Activated T-helper 1 cell treated with anti-CD3 and anti-CD28 coated beads, Interleukin-12 subunit alpha, Interleukin-12 subunit beta, Interleukin-2, Interleukin-4 antibody, amounts not matched to agents 30 ng/mL and 10 ng/mL and 1 ng/mL, durations not matched to agents 14 hours and 24 hours and 36 hours (primary cell): ENCODE measurements at regions of chr6 and their contacts with region 1.

Region 1: GRCh38 chr6:42879372-42880239 is at the start of gene RPL7L1:
- DNase-seq: peak; percentile 82
- H3K4me3 Mint-ChIP-seq: peak within 1 kb of the TSS; percentile 96
- H3K27ac Mint-ChIP-seq: peak within 1 kb of the TSS; percentile 97
- H3K4me1 Mint-ChIP-seq: peaks cover 30% of the 10 kb centered on the region
- H3K27me3 Mint-ChIP-seq: no peaks in the 10 kb centered on the region
- total RNA-seq, gene RPL7L1: 179 TPM in 2 replicates

Region 2: DNA sequence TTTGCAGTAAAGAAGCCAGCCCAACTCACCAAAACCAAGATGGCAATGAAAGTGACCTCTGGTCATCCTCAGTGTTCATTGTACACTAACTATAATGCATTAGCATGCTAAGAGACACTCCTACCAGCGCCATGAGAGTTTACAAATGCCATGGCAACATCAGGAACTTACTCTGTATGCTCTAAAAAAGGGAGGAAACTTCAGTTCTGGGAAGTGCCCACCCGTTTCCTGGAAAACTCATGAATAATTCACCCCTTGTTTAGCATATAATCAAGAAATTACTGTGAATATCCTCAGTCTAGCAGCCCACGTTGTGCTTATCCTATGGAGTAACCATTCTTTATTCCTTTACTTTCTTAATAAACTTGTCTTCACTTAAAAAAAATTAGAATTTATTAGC is 408.5 kb before region 1 on chr6:
- intact Hi-C with region 1: no loop called
- DNase-seq: no peak
- H3K4me3 Mint-ChIP-seq: no peak overlapping the region
- H3K27ac Mint-ChIP-seq: no peak overlapping the region
- H3K4me1 Mint-ChIP-seq: peaks cover 5% of the 10 kb centered on the region
- H3K27me3 Mint-ChIP-seq: peaks cover 5% of the 10 kb centered on the region

Region 3: DNA sequence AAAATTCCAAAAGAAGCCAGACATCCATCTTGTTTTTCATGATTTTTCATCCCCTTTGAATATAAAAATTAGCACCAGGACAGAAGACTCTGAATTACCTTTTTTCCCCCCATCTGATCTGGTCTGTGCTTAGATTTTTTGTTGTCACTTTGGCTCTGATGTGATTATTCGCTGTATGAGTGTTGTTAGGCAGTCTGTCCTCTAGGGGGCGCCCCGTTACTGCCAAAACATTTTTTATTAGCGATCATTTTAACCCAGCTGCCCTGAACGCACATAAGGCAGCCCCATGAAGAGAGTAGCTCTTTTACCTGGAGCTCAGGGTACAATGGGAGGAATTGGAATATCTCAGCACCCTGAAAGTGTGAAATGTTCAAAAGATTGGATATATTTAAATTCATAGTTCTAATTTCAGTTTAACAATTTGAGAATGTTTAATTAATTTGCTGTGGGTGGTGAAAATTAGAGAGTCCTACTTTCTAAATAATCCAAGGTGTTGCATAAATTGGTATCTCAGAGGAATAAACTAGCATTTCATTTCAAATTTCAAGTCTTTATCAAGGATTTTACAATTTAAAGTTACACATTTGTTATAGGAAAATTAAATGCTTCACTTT is 218.0 kb before region 1 on chr6:
- intact Hi-C with region 1: loop called (anchors 1 kb)
- DNase-seq: peak; percentile 62
- H3K4me3 Mint-ChIP-seq: no peak overlapping the region
- H3K27ac Mint-ChIP-seq: no peak overlapping the region
- H3K4me1 Mint-ChIP-seq: peaks cover 6% of the 10 kb centered on the region
- H3K27me3 Mint-ChIP-seq: no peaks in the 10 kb centered on the region

Region 4: DNA sequence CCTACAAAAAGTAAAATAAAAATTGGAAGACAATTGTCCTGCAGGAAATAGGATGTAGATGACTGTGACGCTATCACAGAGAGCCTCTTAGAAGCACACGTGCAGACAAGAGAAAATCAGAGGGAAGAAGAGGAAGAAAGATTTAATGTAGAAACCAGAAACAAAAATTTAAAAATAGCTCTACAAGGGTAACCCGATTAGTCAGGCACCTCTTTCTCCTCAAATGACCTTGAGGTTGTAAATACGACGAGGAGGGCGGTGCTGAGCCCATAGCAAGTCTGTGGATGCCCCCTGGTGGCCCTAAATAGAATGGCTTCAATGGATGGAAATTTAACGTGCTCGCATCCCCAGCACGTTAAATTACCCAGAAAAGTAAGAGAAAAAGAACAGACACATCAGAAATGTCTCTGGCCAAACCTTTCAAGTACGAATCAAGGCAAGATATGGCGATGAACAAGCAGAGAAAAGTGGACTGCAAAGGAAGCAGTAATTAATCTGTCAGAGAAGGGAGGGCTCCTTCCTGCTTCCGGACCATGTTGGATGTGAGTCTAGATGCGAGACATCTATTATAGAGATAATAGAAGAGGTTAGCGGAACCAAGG is 153.0 kb before region 1 on chr6:
- intact Hi-C with region 1: loop called (anchors 1 kb)
- DNase-seq: peak; percentile 59
- H3K4me3 Mint-ChIP-seq: peak overlapping the region; percentile 75
- H3K27ac Mint-ChIP-seq: peak overlapping the region; percentile 98
- H3K4me1 Mint-ChIP-seq: peaks cover 19% of the 10 kb centered on the region
- H3K27me3 Mint-ChIP-seq: peaks cover 5% of the 10 kb centered on the region

Region 5: GRCh38 chr6:42771741-42772100 is 107.9 kb before region 1 on chr6:
- intact Hi-C with region 1: loop called (anchors 1 kb)
- DNase-seq: no peak
- H3K4me3 Mint-ChIP-seq: peak overlapping the region; percentile 74
- H3K27ac Mint-ChIP-seq: peak overlapping the region; percentile 100
- H3K4me1 Mint-ChIP-seq: peaks cover 55% of the 10 kb centered on the region
- H3K27me3 Mint-ChIP-seq: no peaks in the 10 kb centered on the region

Region 6: GRCh38 chr6:42782622-42783176 is 96.9 kb before region 1 on chr6:
- intact Hi-C with region 1: loop called (anchors 1 kb)
- DNase-seq: peak; percentile 48
- H3K4me3 Mint-ChIP-seq: peak overlapping the region; percentile 96
- H3K27ac Mint-ChIP-seq: peak overlapping the region; percentile 98
- H3K4me1 Mint-ChIP-seq: peaks cover 28% of the 10 kb centered on the region
- H3K27me3 Mint-ChIP-seq: no peaks in the 10 kb centered on the region

Region 7: GRCh38 chr6:42890311-42891198 is 10.9 kb after region 1 on chr6:
- intact Hi-C with region 1: loop called (anchors 1 kb)
- DNase-seq: peak; percentile 86
- H3K4me3 Mint-ChIP-seq: peak overlapping the region; percentile 84
- H3K27ac Mint-ChIP-seq: peak overlapping the region; percentile 89
- H3K4me1 Mint-ChIP-seq: peaks cover 12% of the 10 kb centered on the region
- H3K27me3 Mint-ChIP-seq: no peaks in the 10 kb centered on the region

Region 8: GRCh38 chr6:42978839-42979522 is 99.4 kb after region 1 on chr6 and contains the start of gene PEX6:
- intact Hi-C with region 1: loop called (anchors 1 kb)
- DNase-seq: peak; percentile 94
- H3K4me3 Mint-ChIP-seq: peak within 1 kb of the TSS; percentile 91
- H3K27ac Mint-ChIP-seq: peak within 1 kb of the TSS; percentile 96
- H3K4me1 Mint-ChIP-seq: peaks cover 38% of the 10 kb centered on the region
- H3K27me3 Mint-ChIP-seq: no peaks in the 10 kb centered on the region
- total RNA-seq, gene PEX6: 20.9 TPM in 2 replicates

Region 9: DNA sequence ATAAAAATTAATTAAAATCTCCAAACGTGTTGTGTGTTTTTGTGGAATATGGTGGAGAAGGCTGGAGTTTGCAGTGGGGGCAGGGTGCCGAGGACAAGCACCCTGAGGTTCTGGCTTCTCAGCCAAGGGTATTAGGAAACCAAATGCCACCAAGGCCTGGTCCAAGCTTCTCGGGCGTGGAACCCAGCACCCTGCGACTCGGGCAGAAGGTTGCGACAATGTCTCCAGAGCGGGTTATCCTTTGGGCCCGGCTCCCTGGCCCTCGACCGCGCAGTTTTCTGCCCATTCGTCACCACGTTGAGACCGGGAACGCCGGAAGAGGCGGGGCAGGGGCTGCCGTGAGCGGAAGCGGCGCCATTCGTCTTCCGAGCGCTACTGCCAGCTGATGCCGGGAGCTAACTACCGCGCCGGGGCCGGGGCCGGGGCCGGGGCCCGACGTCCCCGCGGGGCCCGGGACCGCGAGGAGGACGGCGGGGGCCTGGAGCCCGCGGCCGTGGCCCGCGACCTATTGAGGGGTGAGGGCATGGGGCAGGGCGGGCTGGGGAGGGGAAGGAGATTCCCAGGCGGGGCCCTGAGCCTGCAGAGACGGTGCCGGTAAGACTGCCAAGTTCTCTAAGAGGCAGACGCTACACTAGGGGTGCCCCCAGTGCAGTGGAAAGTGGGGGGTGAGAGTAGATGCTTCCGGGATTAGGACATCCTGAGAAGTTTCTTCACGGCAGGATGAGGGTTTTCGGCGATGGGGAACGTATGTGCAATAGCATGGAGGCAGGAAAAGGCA is 141.9 kb after region 1 on chr6 and contains the start of gene RRP36:
- intact Hi-C with region 1: no loop called
- DNase-seq: peak; percentile 64
- H3K4me3 Mint-ChIP-seq: peak within 1 kb of the TSS; percentile 98
- H3K27ac Mint-ChIP-seq: peak within 1 kb of the TSS; percentile 87
- H3K4me1 Mint-ChIP-seq: peaks cover 34% of the 10 kb centered on the region
- H3K27me3 Mint-ChIP-seq: no peaks in the 10 kb centered on the region
- total RNA-seq, gene RRP36: 86.1 and 89.9 TPM in 2 replicates